ENCODE measurements at regions of chr6 and their contacts with region 1.

Region 1: GRCh38 chr6:24991810-24992467 is 56.2 kb upstream of the RIPOR2 start:
- DNase-seq: peak; percentile 50 to 90 (median 78)
- ATAC-seq: peak; percentile 86 to 88
- H3K4me3 Mint-ChIP-seq: peak overlapping the region; percentile 36 to 82 (median 70)
- H3K27ac Mint-ChIP-seq: peak overlapping the region; percentile 89 to 96 (median 93)
- H3K4me1 Mint-ChIP-seq: peaks cover 44 to 82% (median 77%) of the 10 kb centered on the region in 4 donors
- H3K27me3 Mint-ChIP-seq: no peaks in the 10 kb centered on the region

Region 2: DNA sequence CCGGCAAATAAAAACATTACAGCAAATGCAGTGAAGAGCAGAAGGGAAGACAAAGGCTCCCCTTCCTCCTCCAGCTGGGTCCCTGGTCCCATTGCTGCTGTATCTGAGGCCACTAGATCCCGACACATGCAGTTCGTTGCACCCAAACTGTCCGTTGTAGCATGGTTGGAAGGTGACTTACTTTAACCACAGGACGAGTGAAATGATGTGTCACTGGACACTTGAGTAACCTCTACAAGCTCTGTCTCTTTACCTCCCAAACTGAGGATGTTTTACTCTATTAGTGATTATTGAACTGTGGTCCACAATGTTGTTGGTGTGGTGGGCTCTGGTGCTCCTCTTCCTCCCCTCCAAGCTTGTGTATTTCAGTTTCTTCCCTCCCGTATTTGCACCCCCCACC is 147.0 kb before region 1 on chr6:
- POLR2A ChIA-PET with region 1: no interaction called
- DNase-seq: no peak
- ATAC-seq: no peak
- H3K4me3 Mint-ChIP-seq: peak overlapping the region in 2 of 10 donors; percentile 37 to 48
- H3K27ac Mint-ChIP-seq: peak overlapping the region; percentile 67 to 90 (median 80)
- H3K4me1 Mint-ChIP-seq: peaks cover 35 to 84% (median 72%) of the 10 kb centered on the region in 4 donors
- H3K27me3 Mint-ChIP-seq: no peaks in the 10 kb centered on the region

Region 3: GRCh38 chr6:24855395-24856245 is 136.3 kb before region 1 on chr6:
- POLR2A ChIA-PET with region 1: interaction called, 46 read pairs
- DNase-seq: peak; percentile 38 to 83 (median 72)
- ATAC-seq: peak; percentile 39 to 67
- H3K4me3 Mint-ChIP-seq: peak overlapping the region; percentile 31 to 84 (median 72)
- H3K27ac Mint-ChIP-seq: peak overlapping the region; percentile 88 to 98 (median 94)
- H3K4me1 Mint-ChIP-seq: peaks cover 31 to 58% (median 53%) of the 10 kb centered on the region in 4 donors
- H3K27me3 Mint-ChIP-seq: no peaks in the 10 kb centered on the region

Region 4: GRCh38 chr6:24910961-24911712 is 80.8 kb before region 1 on chr6:
- POLR2A ChIA-PET with region 1: interaction called, 58 read pairs
- DNase-seq: peak in 5 of 10 donors; percentile 39 to 70 (median 56)
- ATAC-seq: peak; percentile 39 to 45
- H3K4me3 Mint-ChIP-seq: peak overlapping the region; percentile 81 to 99 (median 94)
- H3K27ac Mint-ChIP-seq: peak overlapping the region; percentile 96 to 99 (median 98)
- H3K4me1 Mint-ChIP-seq: peaks cover 75 to 100% (median 98%) of the 10 kb centered on the region in 4 donors
- H3K27me3 Mint-ChIP-seq: no peaks in the 10 kb centered on the region

Region 5: DNA sequence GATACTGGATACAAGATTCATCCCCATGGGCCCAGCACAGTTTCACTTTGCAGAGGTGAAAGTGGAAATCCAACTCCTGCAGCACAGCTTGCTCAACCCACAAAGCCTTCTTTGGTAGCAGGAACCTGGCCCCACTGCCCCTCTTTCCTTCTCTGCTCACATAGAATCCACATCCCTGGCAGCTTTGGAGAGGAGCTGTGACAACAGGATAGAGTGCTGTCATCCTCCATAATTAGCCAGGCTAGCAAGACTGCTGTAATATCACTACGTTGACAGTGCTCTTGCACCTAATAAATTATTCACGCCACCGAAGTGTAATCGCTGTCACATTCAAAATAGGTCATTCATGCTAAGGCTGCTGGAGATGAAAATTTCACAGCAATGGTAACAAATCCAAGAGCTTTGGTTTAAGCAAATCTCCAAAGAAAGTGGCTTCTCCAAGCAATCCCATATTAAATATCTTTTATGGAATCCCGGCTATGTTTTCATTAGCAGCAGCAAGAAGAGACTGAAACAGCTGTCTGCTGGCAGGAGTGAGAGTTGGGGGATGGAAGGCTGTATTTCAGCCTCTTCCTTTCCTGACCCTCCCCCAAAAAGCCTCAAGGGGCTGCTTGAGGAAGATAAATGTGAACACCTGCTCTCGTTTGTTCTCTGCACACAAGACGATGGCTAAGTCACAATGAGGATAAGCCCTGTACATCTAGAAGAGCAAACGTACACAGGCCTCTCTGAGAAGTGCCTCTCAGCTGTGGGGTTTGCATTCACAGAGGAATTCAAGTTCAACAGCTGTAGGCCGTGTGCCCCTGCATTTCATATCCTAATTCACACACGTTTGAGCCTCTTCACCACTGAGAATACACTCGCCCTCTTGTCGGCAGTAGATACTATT is 72.7 kb before region 1 on chr6:
- POLR2A ChIA-PET with region 1: interaction called, 58 read pairs
- DNase-seq: no peak
- ATAC-seq: peak; percentile 33 to 47
- H3K4me3 Mint-ChIP-seq: peak overlapping the region; percentile 66 to 91 (median 80)
- H3K27ac Mint-ChIP-seq: peak overlapping the region; percentile 84 to 99 (median 92)
- H3K4me1 Mint-ChIP-seq: peaks cover 56 to 96% (median 92%) of the 10 kb centered on the region in 4 donors
- H3K27me3 Mint-ChIP-seq: no peaks in the 10 kb centered on the region

Region 6: DNA sequence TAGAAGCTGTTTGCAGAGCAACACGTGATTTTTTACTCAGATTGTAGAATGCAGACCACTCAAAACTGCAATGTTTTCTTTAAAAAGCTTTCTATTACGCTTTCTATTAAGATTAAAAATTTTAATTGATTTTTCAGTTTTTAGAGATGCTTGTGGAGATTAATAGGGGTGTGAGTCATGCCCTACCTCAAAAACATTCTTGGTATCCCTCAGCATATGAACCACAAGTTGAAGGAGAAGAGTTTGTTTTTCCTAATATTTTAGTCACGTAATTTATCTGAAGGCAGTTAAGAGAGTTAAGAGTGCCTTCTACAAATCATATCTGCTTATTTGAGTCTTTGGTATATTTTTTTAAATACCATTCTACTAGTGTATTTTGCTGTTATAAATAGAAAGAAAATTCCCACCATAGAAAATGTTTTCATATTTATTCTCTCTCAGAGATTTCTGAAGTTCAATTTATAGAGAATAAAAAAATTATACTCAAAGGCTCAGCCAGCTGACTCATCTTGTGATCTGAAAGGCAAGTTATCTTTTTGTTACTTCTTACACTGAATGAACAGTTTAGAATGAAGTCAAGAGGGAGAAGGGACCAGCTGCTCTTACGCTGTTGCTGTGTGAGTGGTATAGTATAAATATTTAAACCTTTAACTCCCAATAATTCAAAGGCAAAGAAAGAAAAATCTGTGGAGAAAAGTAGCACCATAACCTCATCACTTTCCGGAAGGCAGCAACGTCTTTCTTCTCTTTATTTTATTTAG is 63.8 kb before region 1 on chr6:
- POLR2A ChIA-PET with region 1: interaction called, 289 read pairs
- DNase-seq: no peak
- ATAC-seq: no peak
- H3K4me3 Mint-ChIP-seq: peak overlapping the region; percentile 81 to 99 (median 98)
- H3K27ac Mint-ChIP-seq: peak overlapping the region; percentile 87 to 98 (median 95)
- H3K4me1 Mint-ChIP-seq: peaks cover 38 to 90% (median 73%) of the 10 kb centered on the region in 4 donors
- H3K27me3 Mint-ChIP-seq: no peaks in the 10 kb centered on the region

Region 7: DNA sequence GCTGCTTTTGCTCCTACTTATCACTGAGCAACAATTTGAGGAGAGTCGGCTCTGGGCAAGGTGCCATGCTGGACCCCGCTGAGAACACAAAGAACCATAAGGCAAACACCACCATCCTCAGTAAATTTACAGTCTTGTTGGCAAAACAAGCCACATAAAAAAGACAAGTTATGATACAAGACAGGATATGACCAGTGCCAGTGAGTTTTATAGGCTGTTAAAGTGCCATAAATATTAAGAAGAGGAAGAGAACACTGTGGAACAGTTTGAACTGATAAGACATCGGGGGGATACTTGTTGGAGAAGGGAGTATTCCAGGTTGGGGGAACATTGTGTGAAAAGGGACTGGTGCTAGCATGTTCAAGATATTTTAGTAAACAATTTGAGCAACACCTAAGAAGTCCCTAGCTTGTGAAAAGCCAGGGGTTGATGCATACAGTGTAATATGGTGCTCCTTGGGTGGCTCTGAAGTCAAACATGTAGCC is 30.9 kb before region 1 on chr6:
- POLR2A ChIA-PET with region 1: interaction called, 49 read pairs
- DNase-seq: peak in 6 of 10 donors; percentile 11 to 70 (median 48)
- ATAC-seq: peak; percentile 74 to 93
- H3K4me3 Mint-ChIP-seq: peak overlapping the region; percentile 34 to 85 (median 67)
- H3K27ac Mint-ChIP-seq: peak overlapping the region; percentile 90 to 100 (median 96)
- H3K4me1 Mint-ChIP-seq: peaks cover 44 to 93% (median 83%) of the 10 kb centered on the region in 4 donors
- H3K27me3 Mint-ChIP-seq: no peaks in the 10 kb centered on the region

Region 8: GRCh38 chr6:24968786-24969185 is 23.2 kb before region 1 on chr6:
- POLR2A ChIA-PET with region 1: interaction called, 49 read pairs
- DNase-seq: no peak
- ATAC-seq: peak; percentile 35 to 52
- H3K4me3 Mint-ChIP-seq: peak overlapping the region in 3 of 10 donors; percentile 24 to 41 (median 34)
- H3K27ac Mint-ChIP-seq: peak overlapping the region in 8 of 10 donors; percentile 0 to 88 (median 56)
- H3K4me1 Mint-ChIP-seq: peaks cover 39 to 88% (median 82%) of the 10 kb centered on the region in 4 donors
- H3K27me3 Mint-ChIP-seq: no peaks in the 10 kb centered on the region

Region 9: DNA sequence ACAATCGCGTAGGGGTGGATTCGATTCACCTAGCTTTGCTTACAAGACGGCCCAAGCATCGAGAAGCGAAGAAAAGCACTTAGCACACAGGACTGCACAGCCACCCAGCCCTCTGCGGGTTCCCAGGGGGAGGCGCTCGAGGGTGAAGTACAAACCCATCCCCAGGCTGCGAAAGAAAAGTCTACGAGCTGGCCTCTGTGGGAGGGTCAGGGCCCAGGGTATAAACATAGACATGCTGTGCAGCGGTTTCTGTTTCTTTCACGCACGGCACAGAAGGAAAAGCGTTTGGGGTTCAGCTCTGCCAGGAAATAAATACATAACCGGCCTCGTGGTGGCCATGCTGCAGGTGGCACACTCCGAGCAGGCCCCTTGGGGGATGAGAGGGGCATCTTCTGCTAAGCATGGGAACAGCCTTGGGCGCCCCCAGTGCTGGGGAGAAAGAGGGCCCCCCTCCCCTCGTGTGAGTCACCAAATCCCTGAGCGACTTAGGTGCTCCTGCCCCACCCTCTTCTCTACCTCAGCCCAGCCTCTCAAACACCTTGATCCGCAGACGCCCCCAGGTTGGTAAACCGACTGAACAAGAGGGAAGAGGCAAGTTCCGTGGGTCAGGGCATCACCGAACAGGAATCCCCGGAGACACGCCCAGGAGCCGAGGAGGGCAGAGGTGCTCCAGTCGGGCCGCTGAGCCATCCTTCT is 35.4 kb after region 1 on chr6:
- POLR2A ChIA-PET with region 1: no interaction called
- DNase-seq: peak; percentile 48 to 81 (median 61)
- ATAC-seq: peak; percentile 96
- H3K4me3 Mint-ChIP-seq: peak overlapping the region; percentile 69 to 86 (median 76)
- H3K27ac Mint-ChIP-seq: peak overlapping the region; percentile 24 to 90 (median 81)
- H3K4me1 Mint-ChIP-seq: peaks cover 11 to 39% (median 31%) of the 10 kb centered on the region in 4 donors
- H3K27me3 Mint-ChIP-seq: no peaks in the 10 kb centered on the region

Region 10: DNA sequence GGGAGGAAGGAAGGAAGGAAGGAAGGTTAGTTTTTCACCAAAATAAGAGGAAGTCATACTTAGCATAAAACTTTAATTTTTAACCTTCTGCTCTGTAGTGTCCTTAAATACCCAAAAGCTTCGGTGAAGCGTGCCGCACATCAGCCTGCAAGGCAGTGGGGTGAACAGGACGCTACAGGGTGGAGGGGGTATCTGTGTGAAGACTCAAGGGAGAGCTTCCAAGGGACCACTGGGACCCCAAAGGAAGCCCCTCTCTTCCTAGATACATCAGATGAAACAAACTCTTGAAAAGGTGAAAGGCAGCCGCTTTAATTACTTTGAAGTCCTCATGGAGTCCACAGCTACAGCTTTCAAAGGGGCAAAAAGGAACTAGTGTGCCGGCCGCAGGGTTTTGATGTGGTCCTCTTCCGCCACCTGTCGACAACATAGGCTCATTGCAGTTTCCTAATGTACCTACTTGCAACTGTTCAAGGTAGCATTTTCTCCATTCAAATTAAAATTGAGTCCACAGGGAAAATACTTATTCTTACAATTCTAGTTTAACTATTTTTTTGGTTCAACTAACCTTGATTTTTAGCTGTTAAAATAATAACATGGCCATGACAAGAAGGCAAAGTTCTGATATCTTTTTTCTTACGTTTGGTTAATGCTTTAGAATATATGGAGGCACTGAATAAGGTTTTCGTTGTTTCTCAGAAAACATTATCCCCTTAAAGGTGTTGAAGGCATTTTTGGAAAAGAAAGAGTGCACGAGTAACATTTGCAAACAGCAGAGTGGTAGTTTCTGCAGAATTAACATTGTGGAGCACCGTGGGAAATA is 78.8 kb after region 1 on chr6:
- POLR2A ChIA-PET with region 1: no interaction called
- DNase-seq: peak; percentile 63 to 91 (median 82)
- ATAC-seq: peak; percentile 95 to 97
- H3K4me3 Mint-ChIP-seq: peak overlapping the region; percentile 6 to 86 (median 75)
- H3K27ac Mint-ChIP-seq: peak overlapping the region; percentile 75 to 96 (median 86)
- H3K4me1 Mint-ChIP-seq: peaks cover 0 to 9% (median 6%) of the 10 kb centered on the region in 4 donors
- H3K27me3 Mint-ChIP-seq: no peaks in the 10 kb centered on the region

Measured in naive thymus-derived CD8-positive, alpha-beta T cell (primary cell).